HCT116 (cell line): ENCODE measurements at regions of chr2 and their contacts with region 1.

Region 1: GRCh38 chr2:229163893-229164292 is 107.2 kb downstream of the PID1 start:
- DNase-seq: no peak
- ATAC-seq: no peak
- H3K4me3 ChIP-seq: no peak overlapping the region
- H3K27ac ChIP-seq: no peak overlapping the region
- H3K4me1 ChIP-seq: no peaks in the 10 kb centered on the region
- H3K27me3 ChIP-seq: no peaks in the 10 kb centered on the region
- CTCF ChIP-seq: no peak
- POLR2A ChIP-seq: no peak
- RAD21 ChIP-seq: no peak

Region 2: GRCh38 chr2:229174794-229175496 is 11.1 kb after region 1 on chr2:
- CTCF ChIA-PET with region 1: no interaction called
- POLR2A ChIA-PET with region 1: no interaction called
- RAD21 ChIA-PET with region 1: no interaction called
- intact Hi-C with region 1: loop called (anchors 1 kb)
- DNase-seq: no peak
- ATAC-seq: no peak
- H3K4me3 ChIP-seq: no peak overlapping the region
- H3K27ac ChIP-seq: no peak overlapping the region
- H3K4me1 ChIP-seq: no peaks in the 10 kb centered on the region
- H3K27me3 ChIP-seq: no peaks in the 10 kb centered on the region
- CTCF ChIP-seq: no peak
- POLR2A ChIP-seq: no peak
- RAD21 ChIP-seq: no peak